Head of caudate nucleus (tissue), 42 donors: ENCODE measurements at regions of chr20 and their contacts with region 1.

Region 1: DNA sequence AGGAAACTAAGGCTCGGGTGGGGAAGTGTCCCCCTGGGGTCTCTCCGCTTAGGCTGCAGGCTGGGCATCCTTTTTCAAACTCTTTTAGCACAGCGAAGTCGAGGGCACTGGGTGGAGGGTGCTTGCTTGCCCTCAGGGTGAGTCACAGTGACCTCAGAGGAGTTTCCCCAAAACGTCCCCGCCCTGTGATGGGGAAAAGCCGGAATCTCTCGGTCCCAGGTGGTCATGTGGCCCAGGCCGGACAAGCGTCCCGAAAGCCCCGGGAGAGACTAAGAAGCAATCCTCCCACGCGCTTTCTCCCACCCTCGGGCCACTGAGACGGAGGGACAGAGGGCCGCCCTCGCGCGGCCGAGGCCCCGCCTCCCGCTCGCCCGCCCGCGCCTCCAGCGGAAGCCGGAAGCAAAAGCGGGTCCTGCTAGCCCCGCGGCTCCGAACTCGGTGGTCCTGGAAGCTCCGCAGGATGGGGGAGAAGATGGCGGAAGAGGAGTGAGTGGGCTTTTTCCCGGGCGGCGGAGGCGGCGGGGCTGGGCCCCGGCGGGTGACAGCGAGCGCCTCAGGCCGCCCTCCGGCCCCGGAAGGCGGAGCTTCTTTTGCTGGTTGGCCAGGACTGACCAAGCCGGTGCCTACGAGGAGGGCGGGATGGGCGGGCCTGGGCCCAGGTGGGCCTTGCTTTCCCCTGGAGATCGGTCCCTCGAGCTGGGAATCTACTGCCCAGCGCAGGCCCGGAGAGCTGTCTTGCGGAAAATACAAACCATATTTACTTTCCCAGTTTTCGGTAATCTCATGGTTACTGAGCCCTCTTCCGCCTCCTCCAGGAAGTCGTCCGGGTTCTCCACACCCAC is at the start of gene SLC9A8:
- DNase-seq: peak; percentile 80 to 97 (median 91)

Region 2: GRCh38 chr20:49768204-49769047 is 44.3 kb before region 1 on chr20:
- intact Hi-C with region 1: loop called (anchors 2 kb)
- DNase-seq: peak in 5 of 42 donors; percentile 14 to 57 (median 30)